ENCODE measurements at regions of chr21 and their contacts with region 1.

Region 1: DNA sequence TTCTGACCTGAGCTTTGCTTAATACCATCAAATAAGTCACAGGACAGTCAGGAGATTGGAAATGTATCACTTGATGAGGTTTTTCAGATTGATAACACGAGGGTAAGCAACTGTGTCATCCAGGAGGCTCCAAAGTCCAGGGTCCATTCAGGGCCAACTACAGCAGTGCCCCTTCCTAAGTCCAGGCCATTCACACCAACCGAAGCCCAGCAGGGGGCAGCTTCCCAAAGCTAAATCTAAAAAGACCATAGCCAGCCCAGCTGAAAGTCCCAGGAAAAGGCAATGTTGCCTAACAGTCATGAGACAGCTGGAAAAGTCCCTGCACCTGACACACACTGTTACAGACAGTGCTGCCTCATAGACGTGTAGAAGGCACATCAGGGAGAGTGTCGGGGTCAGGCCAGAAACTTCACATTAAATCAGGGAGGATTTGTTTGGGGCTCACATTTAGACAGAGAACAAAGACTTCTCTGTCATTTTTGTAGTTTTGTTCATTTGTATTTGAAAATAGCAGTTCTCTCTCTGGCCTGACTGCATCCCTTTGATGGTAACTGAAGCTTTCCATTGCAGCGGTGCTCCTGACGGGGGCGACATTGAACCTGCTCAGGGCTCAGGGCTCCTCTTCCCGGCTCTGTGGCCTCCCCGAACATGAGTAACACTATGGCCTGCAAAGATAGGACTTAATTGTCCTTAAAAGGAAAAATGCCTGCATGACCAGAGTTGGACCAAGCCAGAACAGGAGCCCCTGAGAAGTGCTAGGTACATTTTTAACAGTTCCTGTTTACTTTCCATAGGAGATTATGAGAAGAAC is 200.4 kb downstream of the NRIP1 start:
- DNase-seq: peak; percentile 81

Region 2: GRCh38 chr21:14259747-14260146 is 604.7 kb before region 1 on chr21:
- intact Hi-C with region 1: loop called (anchors 10 kb)
- DNase-seq: no peak

Region 3: DNA sequence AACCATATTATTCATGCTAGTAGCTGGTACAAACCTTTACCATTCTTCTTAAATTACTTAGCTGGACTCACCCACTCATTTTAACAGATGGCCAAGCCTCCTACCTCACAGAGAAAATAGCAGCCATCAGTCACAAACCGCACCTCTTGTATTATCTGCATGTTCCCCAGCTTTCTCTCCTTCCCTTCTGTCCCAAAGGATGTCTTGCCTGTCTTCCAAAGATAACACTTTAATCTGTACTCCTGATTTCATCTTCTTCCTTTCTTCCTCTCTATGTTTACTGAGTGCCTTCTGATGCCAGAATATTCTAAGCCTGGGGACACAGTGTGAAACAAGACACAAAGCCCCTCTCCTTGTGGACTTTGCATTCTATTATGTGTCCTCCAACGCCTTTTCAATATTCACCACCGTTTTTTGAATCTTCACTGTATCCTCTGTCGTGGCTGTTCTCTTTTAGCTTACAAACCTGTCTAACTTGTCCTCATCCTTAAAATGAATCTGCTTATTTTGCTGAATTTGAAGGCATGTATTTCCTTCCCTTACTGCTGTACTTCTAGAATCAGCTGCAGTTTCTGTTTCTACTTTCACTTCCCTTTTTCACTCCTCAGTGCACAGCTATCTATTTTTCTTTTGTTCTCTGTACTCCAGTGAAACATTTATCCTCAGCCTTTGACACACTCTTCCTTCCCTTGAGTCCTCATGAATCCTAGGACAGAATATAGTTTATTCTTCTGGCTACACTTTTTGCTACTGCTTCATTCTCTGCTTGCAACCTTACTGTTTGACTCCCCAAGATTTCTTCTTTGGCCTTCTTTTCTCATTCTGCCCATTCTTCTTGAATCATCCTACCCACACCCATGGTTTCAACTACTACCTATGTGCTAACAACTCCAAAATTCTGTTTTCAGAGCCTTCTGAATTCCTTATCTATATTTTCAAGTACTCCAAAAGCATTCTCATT is 101.4 kb before region 1 on chr21:
- intact Hi-C with region 1: no loop called
- DNase-seq: no peak

Region 4: GRCh38 chr21:14942801-14943490 is 78.5 kb after region 1 on chr21:
- intact Hi-C with region 1: no loop called
- DNase-seq: no peak

Region 5: GRCh38 chr21:15037095-15037899 is 172.9 kb after region 1 on chr21:
- intact Hi-C with region 1: no loop called
- DNase-seq: no peak

Region 6: DNA sequence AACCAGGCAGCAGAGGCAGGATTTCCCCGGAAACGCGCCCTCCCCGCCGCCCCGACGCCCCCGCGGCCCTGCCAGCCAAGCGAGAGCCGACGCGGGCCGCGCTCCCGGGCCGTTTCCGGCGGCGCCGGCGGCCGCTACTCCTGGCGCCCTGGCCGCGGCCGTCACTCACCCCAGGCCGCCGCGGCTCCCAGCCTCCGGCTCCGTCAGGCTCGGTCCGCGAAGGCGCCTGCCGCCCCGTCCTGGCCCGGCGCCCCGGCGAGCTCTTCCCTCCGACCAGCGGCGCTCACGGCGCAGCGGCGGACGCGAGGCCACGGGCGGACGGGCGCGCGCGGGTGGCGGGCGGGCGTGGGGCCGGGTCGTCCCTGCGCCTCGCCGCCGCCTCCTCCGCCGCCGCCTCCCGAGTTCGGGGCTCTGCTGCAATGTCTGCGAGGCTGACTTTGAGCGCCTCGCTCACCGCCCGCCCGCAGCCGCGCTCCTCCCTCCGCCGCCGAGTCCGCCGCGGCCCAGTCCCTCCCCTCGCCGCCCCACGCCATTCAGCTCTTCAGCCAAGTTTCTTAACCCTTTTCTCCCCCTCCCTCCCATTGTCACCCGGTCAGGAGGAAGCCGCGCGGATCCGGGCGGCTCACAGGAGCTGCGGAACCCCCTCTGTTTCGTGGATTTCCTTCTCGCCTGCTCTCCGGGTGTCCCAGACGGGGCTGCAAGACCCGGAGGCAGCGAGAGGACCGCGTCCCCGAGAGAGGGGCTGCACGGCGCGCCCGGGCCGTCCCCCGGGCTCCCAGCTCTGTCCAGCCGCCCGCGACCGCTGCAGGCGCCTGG is 200.4 kb after region 1 on chr21 and contains the start of gene NRIP1:
- intact Hi-C with region 1: loop called (anchors 5 kb)
- DNase-seq: peak; percentile 96
- total RNA-seq, gene NRIP1: 16.7 TPM

Region 7: DNA sequence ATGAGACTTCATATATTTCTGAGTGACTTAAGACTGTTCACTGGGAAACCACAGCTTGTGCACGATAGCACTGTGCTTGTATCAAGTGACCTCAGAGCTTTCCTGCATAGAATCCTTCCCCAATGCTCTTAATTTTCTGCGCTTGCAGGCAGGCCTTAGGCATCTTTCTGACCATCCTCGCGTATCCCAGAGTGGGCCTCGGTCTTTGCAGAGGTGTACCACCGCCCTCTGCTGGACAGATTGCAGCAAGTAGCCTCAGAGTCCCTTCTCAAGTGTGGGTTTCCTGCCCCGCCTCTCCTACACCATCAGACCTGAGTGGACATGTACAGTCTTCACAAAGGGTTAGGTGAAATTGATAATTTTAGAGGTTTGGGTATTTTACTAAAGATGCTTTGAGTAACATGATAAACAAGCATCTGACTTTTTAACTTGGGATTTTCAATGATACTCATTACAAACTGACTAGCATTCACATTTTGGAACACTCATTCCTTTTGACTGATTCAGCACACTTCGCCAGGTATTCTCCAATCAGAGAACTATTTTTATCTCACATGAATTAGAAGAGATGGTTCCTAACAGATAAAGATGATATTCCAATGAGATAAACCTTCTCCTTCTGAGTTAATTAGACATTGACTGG is 618.8 kb after region 1 on chr21:
- intact Hi-C with region 1: loop called (anchors 2 kb)
- DNase-seq: peak; percentile 90

Measured in cardiac septum (tissue), 1 donor.